ENCODE measurements at regions of chr10 and their contacts with region 1.

Region 1: DNA sequence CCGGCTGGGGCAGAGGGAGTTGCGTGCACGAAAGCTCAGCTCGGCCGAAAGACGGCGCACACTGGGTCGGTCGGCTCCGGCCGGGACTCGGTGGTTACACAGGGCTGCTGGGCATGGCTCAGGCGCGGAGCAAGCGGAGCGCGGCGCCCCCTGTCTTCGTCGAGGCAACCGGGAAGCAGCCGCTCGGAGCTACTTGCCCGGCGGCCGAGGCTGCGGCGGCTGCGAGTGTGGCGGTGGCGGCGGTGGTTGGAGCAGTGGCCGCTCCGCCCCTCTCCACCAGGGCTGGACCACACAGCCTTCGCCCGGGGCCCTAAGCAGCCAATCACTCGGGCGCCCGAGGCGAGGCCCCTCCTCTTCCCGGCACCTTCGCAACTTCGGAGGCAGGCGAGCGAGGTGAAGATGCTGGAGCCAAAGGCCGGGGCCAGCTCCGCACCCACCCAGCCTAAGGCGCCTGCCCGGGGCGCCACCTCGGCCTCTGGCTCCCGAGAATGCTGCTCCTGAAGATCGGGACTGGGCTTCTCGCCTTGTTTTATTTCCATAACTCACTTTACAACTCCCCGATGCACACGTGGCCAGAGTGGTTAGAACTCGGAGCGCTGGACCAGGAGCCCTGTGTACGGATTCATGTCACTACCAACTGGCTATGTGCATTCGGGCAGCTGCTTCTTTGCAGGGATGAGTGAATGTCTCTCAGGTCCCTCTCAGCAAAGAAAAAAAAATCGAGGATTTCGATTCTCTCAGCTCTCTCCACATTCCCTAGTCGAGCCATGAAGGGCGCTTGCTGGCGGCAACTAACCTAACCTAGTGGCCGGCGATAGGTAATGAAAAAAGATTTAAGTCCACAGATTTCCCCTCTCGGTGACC is at the start of gene TLL2:
- DNase-seq: peak; percentile 26
- H3K4me3 ChIP-seq: peak within 1 kb of the TSS; percentile 61
- CTCF ChIP-seq: peak; percentile 76

Region 2: GRCh38 chr10:96390460-96390864 is 123.5 kb before region 1 on chr10:
- CTCF ChIA-PET with region 1: interaction called, 137 read pairs
- POLR2A ChIA-PET with region 1: no interaction called
- DNase-seq: no peak
- H3K4me3 ChIP-seq: no peak overlapping the region
- CTCF ChIP-seq: no peak

Region 3: GRCh38 chr10:96431211-96431970 is 82.5 kb before region 1 on chr10:
- CTCF ChIA-PET with region 1: no interaction called
- POLR2A ChIA-PET with region 1: no interaction called
- DNase-seq: no peak
- H3K4me3 ChIP-seq: no peak overlapping the region
- CTCF ChIP-seq: no peak

Region 4: DNA sequence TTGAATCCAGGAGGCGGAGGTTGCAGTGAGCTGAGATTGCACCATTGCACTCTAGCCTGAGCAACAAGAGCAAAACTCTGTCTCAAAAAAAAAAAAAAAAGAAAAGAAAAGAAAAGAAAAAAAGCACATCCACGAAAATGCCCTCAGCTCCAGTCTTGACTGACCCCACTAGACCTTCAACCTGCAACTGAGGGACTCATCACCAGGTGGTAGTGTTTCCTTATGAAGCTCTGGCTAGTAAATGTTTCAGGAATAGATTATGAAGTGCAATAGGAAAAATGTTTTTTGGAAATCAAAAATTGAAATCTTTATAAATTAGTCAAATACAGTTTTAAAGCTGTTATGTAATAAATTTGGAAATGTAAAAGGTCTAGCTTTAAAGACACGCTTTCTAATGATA is 22.6 kb before region 1 on chr10:
- CTCF ChIA-PET with region 1: interaction called, 45 read pairs
- POLR2A ChIA-PET with region 1: no interaction called
- DNase-seq: no peak
- H3K4me3 ChIP-seq: no peak overlapping the region
- CTCF ChIP-seq: peak; percentile 19

Region 5: DNA sequence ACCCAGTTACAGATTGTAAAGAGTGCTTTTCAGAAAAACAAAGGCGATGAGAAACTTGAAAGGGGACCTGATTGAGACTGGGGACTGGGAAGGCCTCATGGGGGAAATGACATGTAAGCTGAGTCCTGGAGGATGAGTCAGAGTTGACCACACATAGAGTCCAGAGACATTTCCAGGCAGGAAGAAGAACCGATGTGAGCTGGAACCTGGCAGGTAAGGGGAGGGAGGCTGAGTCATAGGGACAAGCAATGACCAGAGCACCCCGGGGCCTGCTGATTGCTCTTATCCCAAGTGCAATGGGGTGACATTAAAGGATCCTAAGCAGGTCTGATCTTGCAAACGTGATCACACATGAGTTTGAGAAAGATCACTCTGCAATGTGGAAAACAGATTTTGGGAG is 11.9 kb before region 1 on chr10:
- CTCF ChIA-PET with region 1: interaction called, 45 read pairs
- POLR2A ChIA-PET with region 1: interaction called, 3 read pairs
- DNase-seq: no peak
- H3K4me3 ChIP-seq: no peak overlapping the region
- CTCF ChIP-seq: no peak

Region 6: DNA sequence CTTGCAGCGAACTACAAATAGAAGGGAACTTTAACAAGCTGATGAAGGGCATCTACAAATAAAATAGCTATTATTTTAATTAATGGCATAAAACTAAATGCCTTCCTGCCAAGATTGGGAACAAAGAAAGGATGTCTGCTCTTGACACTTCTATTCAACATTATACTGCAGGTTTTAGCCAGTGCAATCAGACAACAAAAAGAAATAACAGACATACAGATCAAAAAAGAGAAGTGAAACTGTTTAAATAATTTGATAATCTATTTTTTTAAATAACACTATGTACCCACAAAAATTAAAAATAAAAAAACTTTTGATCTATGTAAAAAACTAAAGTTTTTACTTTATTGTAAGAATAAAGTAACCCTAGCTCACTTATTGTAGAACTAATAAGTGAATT is 22.2 kb after region 1 on chr10:
- CTCF ChIA-PET with region 1: interaction called, 21 read pairs
- POLR2A ChIA-PET with region 1: no interaction called
- DNase-seq: no peak
- H3K4me3 ChIP-seq: no peak overlapping the region
- CTCF ChIP-seq: no peak

Measured in AG04449 (cell line).